Thyroid gland (tissue), 4 donors: ENCODE measurements at regions of chr5 and their contacts with region 1.

Region 1: DNA sequence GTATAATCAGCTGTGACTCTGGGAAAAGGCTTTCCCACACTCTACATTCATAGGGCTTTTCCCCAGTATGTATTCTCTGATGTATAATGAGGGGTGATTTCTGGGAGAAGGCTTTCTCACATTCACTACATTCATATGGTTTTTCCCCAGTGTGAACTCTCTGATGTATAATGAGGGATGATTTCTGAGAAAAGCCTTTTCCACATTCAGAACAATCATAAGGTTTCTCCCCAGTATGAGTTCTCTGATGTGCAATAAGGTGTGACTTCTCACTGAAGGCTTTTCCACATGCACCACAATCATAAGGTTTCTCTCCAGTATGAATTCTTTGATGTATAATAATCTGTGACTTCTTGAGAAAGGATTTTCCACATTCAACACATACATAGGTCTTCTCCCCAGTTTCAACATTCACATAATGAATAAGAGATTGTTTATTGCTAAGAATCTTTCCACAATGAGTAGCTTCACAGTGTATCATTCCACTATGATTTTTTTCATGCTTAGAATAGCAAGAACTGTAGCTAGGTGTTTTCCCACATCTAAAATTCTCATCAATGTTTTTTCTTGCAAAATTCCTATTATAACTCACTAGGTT is 26.7 kb upstream of the ZNF300 start:
- DNase-seq: no peak
- H3K4me3 ChIP-seq: no peak overlapping the region
- H3K27ac ChIP-seq: no peak overlapping the region
- H3K4me1 ChIP-seq: no peaks in the 10 kb centered on the region
- H3K27me3 ChIP-seq: no peaks in the 10 kb centered on the region
- CTCF ChIP-seq: no peak
- POLR2A ChIP-seq: no peak

Region 2: DNA sequence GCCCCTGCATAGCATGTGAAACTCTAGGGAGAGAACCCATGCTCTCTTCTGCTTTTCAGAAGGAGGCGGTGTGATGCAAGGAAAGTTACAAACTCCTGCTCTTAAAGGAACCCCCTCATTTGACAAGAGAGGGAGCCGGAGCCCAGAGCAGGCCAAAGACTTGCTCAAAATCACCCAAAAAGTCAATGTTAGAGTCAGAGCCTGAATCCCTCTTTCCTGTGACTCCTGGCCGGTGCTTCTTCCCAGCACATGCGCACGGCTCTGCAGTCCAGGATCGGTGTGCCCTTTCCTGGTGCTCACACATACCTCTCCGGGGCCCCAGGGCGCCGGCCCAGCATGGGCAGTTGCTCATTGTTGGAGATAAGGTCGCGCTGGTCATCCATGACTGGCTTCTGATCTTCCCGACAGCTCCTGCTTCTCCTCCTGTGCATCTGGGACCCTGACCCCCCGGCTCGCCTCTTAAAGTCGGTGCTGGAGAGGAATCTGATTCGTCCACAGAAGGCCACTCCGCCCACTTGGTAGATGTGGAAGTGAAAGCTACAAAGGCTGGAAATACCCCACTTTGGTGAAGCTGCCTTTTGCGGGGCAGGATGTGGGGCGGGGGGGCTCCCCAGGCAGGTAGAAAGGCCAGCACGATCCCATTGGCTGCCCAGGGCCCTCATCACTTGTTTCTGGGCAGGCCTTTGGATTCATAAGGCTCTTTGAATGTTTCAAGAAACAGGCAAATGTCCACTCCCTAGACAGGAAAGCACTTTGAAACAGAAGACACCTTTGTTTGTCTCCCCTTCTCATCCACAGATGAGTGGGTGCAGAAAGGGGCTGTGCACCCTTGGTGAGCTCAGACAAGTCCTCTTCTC is 518.9 kb before region 1 on chr5 and contains the start of gene CD74:
- intact Hi-C with region 1: no loop called
- DNase-seq: peak; percentile 92 to 94
- H3K4me3 ChIP-seq: peak within 1 kb of the TSS; percentile 2 to 45 (median 29)
- H3K27ac ChIP-seq: peak within 1 kb of the TSS; percentile 78 to 87 (median 79)
- H3K4me1 ChIP-seq: peaks cover 14 to 37% of the 10 kb centered on the region in 2 donors
- H3K27me3 ChIP-seq: no peaks in the 10 kb centered on the region
- CTCF ChIP-seq: no peak
- POLR2A ChIP-seq: peak; percentile 7 to 44
- total RNA-seq, gene CD74: 287 to 675 (median 493) TPM

Region 3: DNA sequence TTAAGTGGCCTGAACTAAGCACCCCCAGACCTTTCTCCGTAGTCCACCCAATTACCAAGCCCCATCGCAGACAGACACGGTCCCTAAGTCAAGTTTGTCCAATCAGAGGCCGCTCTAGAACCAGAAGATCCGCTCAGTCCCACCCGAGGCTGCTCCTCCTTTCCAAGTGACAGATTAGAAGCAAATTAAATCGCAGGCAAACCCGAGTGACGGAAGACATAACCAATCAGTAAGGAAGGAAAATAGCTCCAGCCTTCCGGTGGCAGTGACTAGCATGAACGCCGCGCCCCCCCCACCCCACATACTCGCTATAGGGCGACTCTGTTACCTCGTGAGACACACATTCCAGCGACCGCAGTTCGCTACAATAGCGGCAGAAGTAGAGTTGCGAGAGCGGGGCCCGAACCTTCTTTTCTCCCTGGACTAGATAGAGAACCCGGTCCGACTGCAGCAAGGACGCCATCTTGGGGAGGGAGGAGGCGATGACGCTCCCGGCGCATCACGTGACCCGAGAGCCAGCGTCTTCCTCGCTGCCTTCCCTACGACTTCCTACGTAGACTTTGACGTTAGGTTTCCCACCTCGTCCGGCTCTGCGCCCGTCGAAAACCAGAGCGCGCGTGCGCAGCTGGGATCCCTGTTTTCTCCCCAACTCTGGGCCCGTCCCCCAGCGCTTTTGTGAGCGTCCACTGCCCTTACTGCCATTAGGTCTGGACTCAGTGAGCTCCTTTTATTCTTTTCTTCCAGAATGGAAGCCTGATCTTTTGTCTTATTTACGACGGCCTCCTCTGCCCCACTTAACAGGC is 172.7 kb before region 1 on chr5 and contains the start of gene DCTN4:
- intact Hi-C with region 1: no loop called
- DNase-seq: peak; percentile 95 to 96
- H3K4me3 ChIP-seq: peak within 1 kb of the TSS; percentile 64 to 72 (median 67)
- H3K27ac ChIP-seq: peak within 1 kb of the TSS; percentile 95 to 99 (median 98)
- H3K4me1 ChIP-seq: peaks cover 18 to 26% of the 10 kb centered on the region in 2 donors
- H3K27me3 ChIP-seq: no peaks in the 10 kb centered on the region
- CTCF ChIP-seq: peak in 1 of 6 experiments; percentile 20
- POLR2A ChIP-seq: peak in 1 of 2 donors; percentile 63
- total RNA-seq, gene DCTN4: 65.4 to 78.5 (median 72.8) TPM

Region 4: DNA sequence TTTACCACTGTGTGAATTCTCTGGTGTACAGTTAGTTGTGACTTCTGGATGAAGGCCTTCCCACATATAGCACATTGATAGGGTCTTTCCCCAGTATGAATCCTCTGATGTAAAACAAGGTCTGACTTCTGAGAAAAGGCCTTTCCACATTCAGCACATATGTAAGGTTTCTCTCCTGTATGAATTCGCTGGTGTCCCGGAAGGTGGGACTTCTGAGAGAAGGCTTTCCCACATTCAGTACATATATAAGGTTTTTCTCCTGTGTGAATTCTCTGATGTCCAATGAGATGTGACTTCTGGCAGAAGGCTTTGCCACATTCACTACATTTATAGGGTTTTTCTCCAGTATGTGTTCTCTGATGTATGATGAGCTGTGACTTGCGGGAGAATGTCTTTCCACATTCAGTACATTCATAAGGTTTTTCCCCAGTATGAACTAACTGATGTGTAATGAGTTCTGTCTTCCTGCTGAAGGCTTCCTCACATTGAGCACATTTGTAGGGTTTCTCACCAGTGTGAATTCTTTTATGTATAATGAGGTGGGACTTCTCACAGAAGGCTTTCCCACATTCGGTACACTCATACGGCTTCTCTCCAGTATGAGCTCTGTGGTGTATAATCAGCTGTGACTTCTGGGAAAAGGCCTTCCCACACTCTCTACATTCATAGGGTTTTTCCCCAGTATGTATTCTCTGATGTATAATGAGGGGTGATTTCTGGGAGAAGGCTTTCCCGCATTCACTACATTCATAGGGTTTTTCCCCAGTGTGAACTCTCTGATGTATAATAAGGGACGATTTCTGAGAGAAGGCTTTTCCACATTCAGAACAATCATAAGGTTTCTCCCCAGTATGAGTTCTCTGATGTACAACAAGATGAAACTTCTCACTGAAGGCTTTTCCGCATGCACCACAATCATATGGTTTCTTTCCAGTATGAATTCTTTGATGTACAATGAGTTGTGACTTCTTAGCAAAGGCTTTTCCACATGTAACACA is 35.7 kb before region 1 on chr5:
- intact Hi-C with region 1: loop called (anchors 5 kb)
- DNase-seq: no peak
- H3K4me3 ChIP-seq: no peak overlapping the region
- H3K27ac ChIP-seq: no peak overlapping the region
- H3K4me1 ChIP-seq: no peaks in the 10 kb centered on the region
- H3K27me3 ChIP-seq: no peaks in the 10 kb centered on the region
- CTCF ChIP-seq: no peak
- POLR2A ChIP-seq: no peak

Region 5: GRCh38 chr5:151023651-151024050 is 92.2 kb after region 1 on chr5:
- intact Hi-C with region 1: no loop called
- DNase-seq: peak; percentile 39 to 48
- H3K4me3 ChIP-seq: peak overlapping the region in 1 of 3 donors; percentile 55
- H3K27ac ChIP-seq: peak overlapping the region; percentile 92 to 99 (median 94)
- H3K4me1 ChIP-seq: peaks cover 70 to 76% of the 10 kb centered on the region in 2 donors
- H3K27me3 ChIP-seq: no peaks in the 10 kb centered on the region
- CTCF ChIP-seq: no peak
- POLR2A ChIP-seq: no peak